ENCODE measurements at regions of chr5 and their contacts with region 1.

Region 1: DNA sequence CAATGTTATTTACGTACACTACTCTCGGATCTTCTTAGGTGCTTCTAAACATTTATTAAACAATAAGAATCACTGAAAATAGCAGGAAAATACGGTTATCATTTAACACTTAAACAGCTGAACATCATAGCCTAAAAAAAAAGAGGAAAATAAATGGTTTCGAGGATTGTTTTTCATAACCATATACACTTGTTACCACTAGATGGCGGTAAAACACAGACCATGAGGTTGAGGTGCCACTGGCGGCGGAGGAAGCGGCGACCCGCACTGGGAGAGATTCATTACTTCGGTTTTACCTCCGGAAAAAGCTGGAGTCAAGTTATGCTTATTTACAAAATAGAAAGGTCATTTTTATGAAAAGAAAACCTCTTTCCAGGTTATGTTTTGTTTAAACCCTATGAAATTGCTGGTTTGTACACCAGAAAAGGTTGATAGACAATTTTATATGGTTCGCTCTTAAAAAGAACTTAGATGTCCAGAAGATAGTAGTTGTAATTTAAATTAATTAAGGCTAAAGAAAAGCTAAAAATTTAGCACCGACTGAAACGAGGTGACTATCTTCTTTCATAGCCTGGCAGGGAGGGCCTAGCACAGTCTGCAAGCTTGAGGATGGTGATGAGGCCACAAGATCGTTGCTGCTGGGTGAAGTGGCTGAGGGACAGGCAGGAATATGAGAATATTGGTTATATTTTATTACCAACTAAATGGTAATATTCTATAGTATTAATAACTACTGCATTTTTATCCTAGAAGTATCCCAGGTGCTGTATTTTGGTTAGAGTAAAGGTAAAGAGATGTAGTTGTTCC is 605.7 kb downstream of the RAB3C start:
- DNase-seq: peak; percentile 44 to 88 (median 73)

Region 2: DNA sequence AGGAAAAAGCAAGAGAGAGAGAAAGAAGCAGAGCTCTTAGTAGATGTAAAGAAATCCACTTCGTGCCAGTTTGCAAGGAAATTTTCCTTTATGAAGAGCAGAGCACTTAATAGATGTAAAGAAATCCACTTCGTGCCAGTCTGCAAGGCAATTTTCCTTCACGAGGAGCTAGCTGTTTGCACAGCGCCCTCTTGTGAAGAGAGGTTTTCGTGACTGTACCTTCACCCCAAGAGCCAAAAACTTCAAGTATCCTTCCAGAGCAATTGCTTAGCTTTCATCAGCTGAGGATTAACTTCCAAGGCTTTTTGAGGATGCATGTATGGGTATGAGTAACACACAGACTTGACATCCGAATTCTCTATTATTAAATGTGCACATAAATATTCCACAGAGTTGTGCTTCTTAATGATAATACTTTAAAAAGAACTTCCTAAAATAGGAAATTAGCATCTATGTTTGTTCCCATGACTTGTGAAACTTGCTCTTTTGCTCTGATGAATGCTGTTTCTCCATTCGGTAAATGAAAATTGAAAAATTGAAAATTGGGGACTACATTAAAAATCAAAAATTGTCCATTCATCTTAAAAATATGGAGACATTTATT is 179.3 kb after region 1 on chr5:
- intact Hi-C with region 1: loop called (anchors 5 kb)
- DNase-seq: peak; percentile 15 to 87 (median 70)